Breast epithelium (tissue), 4 donors: ENCODE measurements at regions of chr13 and their contacts with region 1.

Region 1: DNA sequence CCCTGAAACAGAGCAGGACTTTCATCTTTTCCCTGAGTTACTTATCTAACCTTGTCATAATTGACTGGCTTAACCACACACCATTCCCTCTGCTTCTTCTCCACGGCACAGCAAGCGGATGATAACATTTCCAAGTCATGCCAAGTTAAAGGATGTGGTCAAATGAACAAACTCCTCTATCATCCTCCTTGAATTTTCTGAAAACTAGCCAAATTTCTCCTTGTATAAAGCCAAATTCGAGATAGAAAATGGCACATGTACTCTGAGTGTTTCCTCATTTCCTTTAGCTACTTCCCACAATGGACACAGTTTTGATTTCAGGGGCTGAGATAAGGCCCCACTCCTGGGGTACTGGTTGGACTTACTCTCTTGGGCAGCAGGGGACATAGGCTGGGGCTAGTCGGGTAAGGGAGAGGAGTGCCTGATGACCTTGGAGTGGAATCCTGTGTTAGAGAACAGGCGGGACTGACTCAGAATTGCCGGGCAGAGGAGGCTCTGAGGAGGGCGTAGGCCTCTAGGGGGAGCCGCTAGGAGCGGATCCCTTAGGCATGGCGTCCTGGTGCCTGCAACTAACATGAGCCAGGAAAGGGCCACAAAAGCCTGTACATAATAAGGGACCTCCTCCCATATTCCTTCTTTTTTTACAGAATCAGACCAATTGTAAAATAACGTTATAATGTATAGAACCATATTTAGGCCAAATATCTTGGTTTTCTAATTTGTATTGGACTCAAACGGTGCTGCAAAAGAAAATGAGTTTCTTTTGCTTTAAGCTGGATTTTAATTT is 20.3 kb upstream of the TMTC4 start:
- DNase-seq: no peak
- H3K4me3 ChIP-seq: no peak overlapping the region
- H3K27ac ChIP-seq: no peak overlapping the region
- H3K4me1 ChIP-seq: no peaks in the 10 kb centered on the region
- H3K27me3 ChIP-seq: no peaks in the 10 kb centered on the region
- CTCF ChIP-seq: no peak
- POLR2A ChIP-seq: no peak

Region 2: DNA sequence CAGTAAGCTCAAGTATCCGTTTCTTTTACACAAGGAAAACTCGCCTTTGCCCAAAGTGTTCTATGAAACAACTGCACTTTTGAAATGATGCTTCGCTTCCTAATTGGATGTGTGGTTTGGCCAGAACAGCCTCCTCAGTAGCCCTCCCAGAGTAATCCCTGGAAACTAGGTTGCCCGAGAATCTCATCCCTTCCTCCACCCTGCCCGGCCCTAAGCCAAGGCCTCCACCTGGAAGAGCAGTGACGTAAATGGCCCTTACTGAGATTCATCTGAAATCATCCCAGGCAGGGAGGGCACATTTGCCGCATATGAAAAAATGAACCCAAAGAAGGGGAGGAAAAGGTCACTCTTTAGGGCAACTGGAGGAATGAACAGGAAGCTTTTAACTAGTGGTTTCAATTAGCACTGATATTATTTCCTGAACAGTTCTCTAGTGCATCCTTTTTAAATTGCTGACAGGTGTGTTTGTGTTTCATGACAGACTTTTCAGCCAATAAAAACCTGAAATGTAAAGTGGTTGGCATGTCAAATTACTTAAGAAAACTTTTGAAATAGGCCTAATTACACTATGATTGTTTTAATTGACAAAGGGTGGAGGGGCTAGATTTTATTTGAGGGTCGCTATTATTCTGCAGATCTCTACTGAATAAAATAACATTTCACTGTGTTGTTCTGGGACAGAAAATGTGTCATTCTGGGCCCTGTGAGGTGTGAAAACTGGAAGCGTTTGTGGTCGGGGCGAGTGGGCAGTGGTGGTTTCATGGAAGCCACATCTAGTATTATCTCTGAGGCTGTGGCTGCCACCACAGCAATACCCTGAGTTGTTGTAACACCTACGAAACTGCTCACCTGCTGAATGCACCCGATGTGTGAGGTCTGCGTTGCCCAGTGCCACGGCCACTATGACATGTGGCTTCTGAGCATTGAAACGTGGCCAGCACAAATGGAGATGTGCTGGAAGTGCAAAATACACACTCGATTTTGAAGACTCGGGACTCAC is 835.4 kb before region 1 on chr13:
- intact Hi-C with region 1: loop called (anchors 5 kb)
- DNase-seq: no peak
- H3K4me3 ChIP-seq: no peak overlapping the region
- H3K27ac ChIP-seq: no peak overlapping the region
- H3K4me1 ChIP-seq: no peaks in the 10 kb centered on the region
- H3K27me3 ChIP-seq: no peaks in the 10 kb centered on the region
- CTCF ChIP-seq: no peak
- POLR2A ChIP-seq: no peak

Region 3: GRCh38 chr13:100063333-100063732 is 631.6 kb before region 1 on chr13:
- intact Hi-C with region 1: no loop called
- DNase-seq: no peak
- H3K4me3 ChIP-seq: no peak overlapping the region
- H3K27ac ChIP-seq: no peak overlapping the region
- H3K4me1 ChIP-seq: no peaks in the 10 kb centered on the region
- H3K27me3 ChIP-seq: no peaks in the 10 kb centered on the region
- CTCF ChIP-seq: no peak
- POLR2A ChIP-seq: no peak